ENCODE measurements at regions of chr7 and their contacts with region 1.

Region 1: GRCh38 chr7:129825496-129826267 is 127.1 kb downstream of the UBE2H start:
- DNase-seq: peak; percentile 91
- ATAC-seq: peak; percentile 78
- H3K4me3 Mint-ChIP-seq: peak overlapping the region; percentile 87
- H3K27ac Mint-ChIP-seq: peak overlapping the region; percentile 42
- H3K4me1 Mint-ChIP-seq: peaks cover 16% of the 10 kb centered on the region
- H3K27me3 Mint-ChIP-seq: no peaks in the 10 kb centered on the region
- CTCF ChIP-seq: peak; percentile 94

Region 2: DNA sequence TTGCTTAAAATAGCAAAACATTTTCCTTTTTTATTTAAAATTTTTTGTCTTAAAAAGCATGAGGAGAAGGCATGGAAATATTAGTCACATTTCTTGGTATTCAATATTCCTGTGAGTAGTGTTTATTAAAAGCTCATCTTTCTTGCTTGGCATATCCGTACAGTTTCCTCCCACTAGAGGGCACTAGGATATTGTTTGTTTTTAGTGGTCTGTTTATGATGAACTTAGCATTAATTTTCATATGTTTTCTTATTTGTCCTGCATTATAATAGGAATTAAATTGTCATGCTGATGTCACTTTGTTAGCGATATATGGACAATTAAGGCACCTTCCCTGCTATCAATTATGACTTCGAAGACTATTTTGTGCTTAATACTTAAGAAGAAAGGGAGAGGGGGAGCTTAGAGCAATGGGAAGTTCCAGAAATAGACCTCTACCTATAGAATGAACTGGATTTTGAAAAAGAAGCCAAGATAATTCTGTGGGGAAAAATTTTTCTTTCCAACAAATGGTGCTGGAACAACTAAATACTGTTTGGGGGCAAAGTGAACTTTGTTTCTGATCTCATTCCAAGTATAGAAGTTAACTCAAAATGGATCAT is 482.5 kb before region 1 on chr7:
- CTCF ChIA-PET with region 1: no interaction called
- POLR2A ChIA-PET with region 1: no interaction called
- intact Hi-C with region 1: loop called (anchors 10 kb)
- DNase-seq: peak; percentile 16
- ATAC-seq: peak; percentile 50
- H3K4me3 Mint-ChIP-seq: no peak overlapping the region
- H3K27ac Mint-ChIP-seq: no peak overlapping the region
- H3K4me1 Mint-ChIP-seq: peaks cover 31% of the 10 kb centered on the region
- H3K27me3 Mint-ChIP-seq: no peaks in the 10 kb centered on the region
- CTCF ChIP-seq: peak; percentile 83

Region 3: DNA sequence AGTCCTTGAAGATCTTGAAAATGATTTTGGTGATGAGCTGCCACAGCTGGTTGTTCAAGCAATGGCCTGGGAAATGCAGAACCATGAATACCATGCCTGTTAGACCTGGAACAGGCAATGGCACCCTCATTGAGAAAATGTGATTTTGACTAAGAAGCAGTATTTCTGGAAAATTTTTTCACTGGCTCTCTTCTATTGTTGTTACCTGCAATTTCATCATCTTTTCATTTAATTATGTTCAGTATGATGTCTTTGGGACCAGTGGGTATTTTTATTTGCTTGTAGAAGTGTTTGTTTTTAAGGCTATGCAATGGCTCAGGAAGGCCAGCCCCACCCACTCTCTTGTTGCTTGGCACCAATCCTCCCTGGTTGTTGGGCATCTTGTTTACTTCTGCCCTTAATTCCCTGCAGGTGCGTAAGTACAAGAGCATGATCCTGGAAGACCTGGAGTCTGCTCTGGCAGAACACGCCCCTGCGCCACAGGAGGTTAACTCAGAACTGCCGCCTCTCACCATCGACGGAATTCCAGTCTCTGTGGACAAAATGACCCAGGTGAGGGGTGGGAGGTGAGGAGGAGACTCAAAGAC is 135.6 kb before region 1 on chr7:
- CTCF ChIA-PET with region 1: no interaction called
- POLR2A ChIA-PET with region 1: no interaction called
- intact Hi-C with region 1: no loop called
- DNase-seq: no peak
- ATAC-seq: no peak
- H3K4me3 Mint-ChIP-seq: no peak overlapping the region
- H3K27ac Mint-ChIP-seq: no peak overlapping the region
- H3K4me1 Mint-ChIP-seq: peaks cover 2% of the 10 kb centered on the region
- H3K27me3 Mint-ChIP-seq: no peaks in the 10 kb centered on the region
- CTCF ChIP-seq: no peak

Region 4: GRCh38 chr7:129762438-129762837 is 63.2 kb before region 1 on chr7:
- CTCF ChIA-PET with region 1: interaction called, 16 read pairs
- POLR2A ChIA-PET with region 1: interaction called, 3 read pairs
- intact Hi-C with region 1: no loop called
- DNase-seq: no peak
- ATAC-seq: no peak
- H3K4me3 Mint-ChIP-seq: no peak overlapping the region
- H3K27ac Mint-ChIP-seq: no peak overlapping the region
- H3K4me1 Mint-ChIP-seq: no peaks in the 10 kb centered on the region
- H3K27me3 Mint-ChIP-seq: no peaks in the 10 kb centered on the region
- CTCF ChIP-seq: no peak

Region 5: DNA sequence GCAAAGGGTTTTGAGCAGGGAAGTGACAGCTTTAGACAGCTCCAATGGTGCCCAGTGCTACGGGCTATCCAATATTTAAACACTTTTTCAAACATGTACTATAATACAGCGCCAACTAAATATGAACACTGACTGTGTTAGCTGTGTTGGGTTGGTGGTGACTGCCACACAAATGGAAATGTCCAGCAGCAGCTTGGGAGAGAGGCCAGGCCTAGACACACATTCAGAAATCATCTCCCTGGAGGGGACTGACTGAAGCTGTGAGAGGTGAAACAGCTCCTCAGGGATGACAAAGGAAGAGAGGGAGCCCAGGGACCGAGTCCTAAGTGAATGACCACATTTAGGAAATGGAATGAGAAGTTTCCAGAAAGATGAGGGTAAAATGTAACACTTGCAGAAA is 11.3 kb after region 1 on chr7:
- CTCF ChIA-PET with region 1: interaction called, 21 read pairs
- POLR2A ChIA-PET with region 1: interaction called, 6 read pairs
- intact Hi-C with region 1: no loop called
- DNase-seq: no peak
- ATAC-seq: no peak
- H3K4me3 Mint-ChIP-seq: no peak overlapping the region
- H3K27ac Mint-ChIP-seq: peak overlapping the region; percentile 47
- H3K4me1 Mint-ChIP-seq: peaks cover 16% of the 10 kb centered on the region
- H3K27me3 Mint-ChIP-seq: no peaks in the 10 kb centered on the region
- CTCF ChIP-seq: no peak

Region 6: GRCh38 chr7:129875745-129876411 is 50.2 kb after region 1 on chr7:
- CTCF ChIA-PET with region 1: interaction called, 15 read pairs
- POLR2A ChIA-PET with region 1: no interaction called
- intact Hi-C with region 1: no loop called
- DNase-seq: no peak
- ATAC-seq: no peak
- H3K4me3 Mint-ChIP-seq: no peak overlapping the region
- H3K27ac Mint-ChIP-seq: no peak overlapping the region
- H3K4me1 Mint-ChIP-seq: peaks cover 47% of the 10 kb centered on the region
- H3K27me3 Mint-ChIP-seq: no peaks in the 10 kb centered on the region
- CTCF ChIP-seq: no peak

Measured in activated CD8-positive, alpha-beta T cell treated with anti-CD3 and anti-CD28 coated beads for 36 hours (primary cell).